ENCODE measurements at regions of chr19 and their contacts with region 1.

Region 1: DNA sequence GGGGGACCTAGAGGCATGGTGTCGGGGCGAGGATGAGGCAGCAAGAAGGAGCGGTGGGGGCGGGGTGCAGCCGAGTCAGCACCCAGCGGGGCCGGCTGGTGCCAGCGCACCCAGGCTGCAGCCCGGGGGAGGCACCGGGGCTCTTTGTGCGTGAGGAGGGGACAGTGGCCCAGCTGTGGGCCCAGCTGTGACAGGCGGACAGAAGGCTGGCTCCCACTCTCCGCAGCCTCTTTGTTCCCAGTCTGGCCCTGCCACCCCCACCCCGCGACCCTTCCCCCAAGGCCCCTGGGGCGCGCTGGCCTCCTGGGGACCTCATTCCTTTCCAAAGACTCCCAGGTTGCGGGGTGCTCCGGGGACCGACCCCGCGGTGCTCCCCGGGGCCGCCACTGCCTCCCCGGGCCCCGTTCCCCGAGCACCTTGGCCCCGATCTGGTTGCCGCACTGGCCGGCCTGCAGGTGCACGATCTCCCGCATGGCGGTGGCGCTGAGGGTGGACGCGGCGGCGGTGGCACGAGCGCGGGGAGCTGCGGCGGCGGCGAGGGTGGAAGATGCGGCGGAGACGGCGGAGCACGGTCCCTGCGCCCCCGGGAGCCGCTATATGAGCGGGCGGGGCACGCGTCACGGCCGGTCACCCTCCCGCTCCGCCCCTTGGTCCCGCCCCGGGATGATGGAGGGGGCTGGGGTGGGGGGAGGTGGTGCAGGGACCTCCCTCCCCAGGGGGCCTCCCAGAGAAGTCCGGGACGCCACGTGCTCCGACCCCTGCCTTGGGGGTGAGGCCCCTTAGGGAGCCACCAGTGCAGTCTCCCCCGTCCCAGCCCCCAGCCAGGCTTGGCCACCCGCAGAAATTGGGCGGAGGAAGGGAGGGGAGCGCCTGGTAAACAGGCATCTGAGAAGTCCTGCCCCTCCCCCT is at the start of gene TUBB4A:
- DNase-seq: peak in 8 of 9 experiments; percentile 18 to 73 (median 46)
- ATAC-seq: peak; percentile 52
- H3K4me3 ChIP-seq: peak within 1 kb of the TSS; percentile 48 to 56
- H3K4me3 Mint-ChIP-seq: peak within 1 kb of the TSS; percentile 85
- H3K27ac ChIP-seq: no peak within 1 kb of the TSS
- H3K27ac Mint-ChIP-seq: no peak within 1 kb of the TSS
- H3K4me1 ChIP-seq: peaks cover 4% of the 10 kb centered on the region
- H3K4me1 Mint-ChIP-seq: peaks cover 27% of the 10 kb centered on the region
- H3K27me3 ChIP-seq: peaks cover 0 to 3% of the 10 kb centered on the region in 2 experiments
- H3K27me3 Mint-ChIP-seq: no peaks in the 10 kb centered on the region
- CTCF ChIP-seq: no peak
- total RNA-seq, gene TUBB4A: 1.4 to 1.6 TPM

Region 2: GRCh38 chr19:6218491-6219162 is 283.4 kb before region 1 on chr19:
- CTCF ChIA-PET with region 1: interaction called, 5 read pairs
- POLR2A ChIA-PET with region 1: no interaction called
- intact Hi-C with region 1: loop called in 1 of 2 experiments (anchors 2 kb)
- DNase-seq: peak; percentile 65 to 91 (median 80)
- ATAC-seq: peak; percentile 95
- H3K4me3 ChIP-seq: no peak overlapping the region
- H3K4me3 Mint-ChIP-seq: no peak overlapping the region
- H3K27ac ChIP-seq: no peak overlapping the region
- H3K27ac Mint-ChIP-seq: peak overlapping the region; percentile 67
- H3K4me1 ChIP-seq: no peaks in the 10 kb centered on the region
- H3K4me1 Mint-ChIP-seq: peaks cover 3% of the 10 kb centered on the region
- H3K27me3 ChIP-seq: no peaks in the 10 kb centered on the region
- H3K27me3 Mint-ChIP-seq: no peaks in the 10 kb centered on the region
- CTCF ChIP-seq: peak; percentile 93

Region 3: GRCh38 chr19:6481541-6482342 is 20.3 kb before region 1 on chr19 and contains the start of gene DENND1C:
- CTCF ChIA-PET with region 1: interaction called, 11 read pairs
- POLR2A ChIA-PET with region 1: interaction called, 5 read pairs
- intact Hi-C with region 1: loop called in 1 of 2 experiments (anchors 2 kb)
- DNase-seq: peak in 8 of 9 experiments; percentile 61 to 84 (median 72)
- ATAC-seq: peak; percentile 88
- H3K4me3 ChIP-seq: peak within 1 kb of the TSS; percentile 89 to 95
- H3K4me3 Mint-ChIP-seq: peak within 1 kb of the TSS; percentile 98
- H3K27ac ChIP-seq: peak within 1 kb of the TSS; percentile 92 to 93
- H3K27ac Mint-ChIP-seq: peak within 1 kb of the TSS; percentile 96
- H3K4me1 ChIP-seq: peaks cover 33% of the 10 kb centered on the region
- H3K4me1 Mint-ChIP-seq: peaks cover 38% of the 10 kb centered on the region
- H3K27me3 ChIP-seq: no peaks in the 10 kb centered on the region
- H3K27me3 Mint-ChIP-seq: no peaks in the 10 kb centered on the region
- CTCF ChIP-seq: no peak
- total RNA-seq, gene DENND1C: 94.0 to 95.9 TPM

Region 4: GRCh38 chr19:6674868-6675305 is 172.9 kb after region 1 on chr19:
- CTCF ChIA-PET with region 1: no interaction called
- POLR2A ChIA-PET with region 1: no interaction called
- intact Hi-C with region 1: no loop called
- DNase-seq: peak; percentile 56 to 93 (median 86)
- ATAC-seq: peak; percentile 67
- H3K4me3 ChIP-seq: peak overlapping the region in 1 of 2 experiments; percentile 31
- H3K4me3 Mint-ChIP-seq: peak overlapping the region; percentile 50
- H3K27ac ChIP-seq: peak overlapping the region in 1 of 2 experiments; percentile 6
- H3K27ac Mint-ChIP-seq: peak overlapping the region; percentile 84
- H3K4me1 ChIP-seq: peaks cover 33% of the 10 kb centered on the region
- H3K4me1 Mint-ChIP-seq: peaks cover 45% of the 10 kb centered on the region
- H3K27me3 ChIP-seq: no peaks in the 10 kb centered on the region
- H3K27me3 Mint-ChIP-seq: no peaks in the 10 kb centered on the region
- CTCF ChIP-seq: no peak